Activated naive CD8-positive, alpha-beta T cell treated with anti-CD3 and anti-CD28 coated beads, Interleukin-2, amount 10 ng/mL, durations not matched to agents 7 days and 5 days (primary cell): ENCODE measurements at regions of chr17 and their contacts with region 1.

Region 1: DNA sequence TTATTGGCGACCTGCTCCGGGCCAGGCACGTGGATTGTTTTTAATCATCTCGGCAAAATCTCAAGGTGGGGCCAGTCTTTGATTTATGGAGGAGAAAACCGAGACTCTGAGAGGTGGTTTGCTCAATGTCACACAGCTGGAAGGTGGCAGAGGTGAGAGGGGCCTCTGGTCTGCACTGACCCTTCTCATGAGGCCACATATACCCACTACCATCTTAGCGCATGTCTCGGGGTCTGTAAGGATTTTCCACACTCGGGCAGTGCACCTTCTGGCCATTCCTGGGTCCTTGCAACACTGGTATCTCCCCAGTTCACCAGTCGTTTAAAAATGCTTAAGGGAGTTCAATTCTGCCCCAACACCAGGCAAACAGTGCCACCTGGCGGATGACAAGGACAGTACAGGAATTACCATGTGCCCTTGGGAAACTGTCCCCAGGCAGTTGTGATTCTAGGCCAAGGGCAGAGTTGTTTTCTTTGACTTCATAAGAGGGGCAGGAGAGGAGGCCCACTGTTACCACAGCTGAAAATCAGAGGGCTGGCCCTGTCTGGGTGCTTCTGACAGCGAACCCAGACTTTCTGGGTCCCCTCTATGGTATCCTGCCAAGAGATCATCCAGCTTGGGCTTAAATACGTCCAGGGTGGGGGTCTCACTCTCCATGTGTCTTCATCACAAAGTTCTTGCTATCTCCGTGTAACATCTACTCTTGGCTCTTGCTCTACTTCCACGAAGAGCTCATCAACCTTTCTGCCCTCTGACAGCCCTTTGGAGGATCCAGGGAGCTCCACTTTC is 39.4 kb upstream of the RAI1 start:
- DNase-seq: peak; percentile 76
- ATAC-seq: peak; percentile 86
- H3K4me3 Mint-ChIP-seq: no peak overlapping the region
- H3K27ac Mint-ChIP-seq: no peak overlapping the region
- H3K4me1 Mint-ChIP-seq: no peaks in the 10 kb centered on the region
- H3K27me3 Mint-ChIP-seq: peaks cover 5% of the 10 kb centered on the region

Region 2: GRCh38 chr17:17496189-17497064 is 145.4 kb before region 1 on chr17 and contains the start of gene RASD1:
- POLR2A ChIA-PET with region 1: interaction called, 11 read pairs
- DNase-seq: peak; percentile 93
- ATAC-seq: peak; percentile 84
- H3K4me3 Mint-ChIP-seq: peak within 1 kb of the TSS; percentile 76
- H3K27ac Mint-ChIP-seq: no peak within 1 kb of the TSS
- H3K4me1 Mint-ChIP-seq: peaks cover 13% of the 10 kb centered on the region
- H3K27me3 Mint-ChIP-seq: peaks cover 21% of the 10 kb centered on the region
- total RNA-seq, gene RASD1: 1.3 to 2.3 TPM